ENCODE measurements at regions of chr11 and their contacts with region 1.

Region 1: GRCh38 chr11:133104009-133104744 is 428.1 kb downstream of the OPCML start:
- DNase-seq: no peak

Region 2: DNA sequence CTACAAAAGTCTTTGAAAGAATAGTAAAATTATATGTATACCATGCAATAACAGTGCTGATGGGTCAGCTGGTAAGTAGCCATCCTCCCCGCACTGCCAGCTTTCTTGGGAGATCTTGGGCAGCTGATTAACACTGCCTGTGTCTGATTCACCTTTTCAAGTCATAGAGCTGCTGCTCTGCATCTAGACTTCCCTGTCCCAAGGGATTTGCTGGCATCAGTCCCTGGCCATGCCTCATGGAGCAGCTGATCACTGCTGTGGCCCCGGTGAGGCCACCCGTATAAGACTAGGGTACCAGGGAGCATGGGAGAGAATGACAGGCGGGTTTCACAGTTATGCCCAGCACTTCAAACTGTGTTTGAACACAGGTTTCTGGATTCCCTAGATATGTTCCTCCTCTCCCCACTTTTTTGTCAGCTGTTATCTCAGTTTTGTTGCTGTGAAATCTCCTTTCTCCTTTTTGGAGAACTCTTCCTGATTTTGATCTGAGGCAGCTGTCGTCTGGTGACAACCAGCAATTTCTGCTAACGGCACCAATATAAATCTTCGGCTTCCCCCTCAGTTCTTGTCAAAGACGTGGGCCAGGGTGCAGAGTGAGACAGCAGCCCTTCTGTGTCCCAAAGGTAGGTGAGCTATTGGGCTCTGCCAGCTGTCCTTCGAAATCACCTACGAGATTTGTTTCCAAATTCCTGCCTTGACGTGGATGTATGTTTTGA is 1294.8 kb before region 1 on chr11:
- intact Hi-C with region 1: no loop called
- DNase-seq: no peak

Region 3: DNA sequence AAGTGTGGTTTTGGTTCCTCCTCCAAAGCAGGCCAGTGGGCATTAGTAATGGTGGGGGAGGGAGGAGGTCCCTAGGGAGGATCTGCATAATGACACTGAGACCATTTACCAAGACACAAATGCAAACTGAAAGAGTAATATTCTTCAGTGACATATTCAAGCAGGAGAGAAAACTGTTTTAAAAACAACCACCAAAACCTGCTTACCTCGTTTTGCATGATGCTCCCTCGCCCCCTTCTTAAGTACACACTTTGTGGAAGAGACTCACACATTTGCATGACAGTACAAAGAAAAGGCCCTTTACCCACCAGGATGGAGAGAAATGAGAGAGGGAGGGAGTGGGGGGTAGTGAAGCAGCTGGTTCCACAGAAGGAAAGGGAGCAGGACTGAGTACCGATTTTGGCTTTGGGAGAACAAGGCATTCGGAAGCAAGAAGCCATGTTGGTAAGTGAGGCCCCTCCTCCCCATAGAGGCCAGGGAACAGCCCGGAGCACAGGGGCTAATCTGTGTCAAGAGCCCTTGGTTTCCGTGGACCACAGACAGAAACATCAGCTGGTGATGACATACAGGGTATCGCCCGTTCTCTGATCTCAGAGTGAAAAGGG is 441.1 kb after region 1 on chr11:
- intact Hi-C with region 1: loop called in 1 of 2 experiments (anchors 5 kb)
- DNase-seq: no peak

Measured in posterior vena cava (tissue), 2 donors.